ENCODE measurements at regions of chr13 and their contacts with region 1.

Region 1: DNA sequence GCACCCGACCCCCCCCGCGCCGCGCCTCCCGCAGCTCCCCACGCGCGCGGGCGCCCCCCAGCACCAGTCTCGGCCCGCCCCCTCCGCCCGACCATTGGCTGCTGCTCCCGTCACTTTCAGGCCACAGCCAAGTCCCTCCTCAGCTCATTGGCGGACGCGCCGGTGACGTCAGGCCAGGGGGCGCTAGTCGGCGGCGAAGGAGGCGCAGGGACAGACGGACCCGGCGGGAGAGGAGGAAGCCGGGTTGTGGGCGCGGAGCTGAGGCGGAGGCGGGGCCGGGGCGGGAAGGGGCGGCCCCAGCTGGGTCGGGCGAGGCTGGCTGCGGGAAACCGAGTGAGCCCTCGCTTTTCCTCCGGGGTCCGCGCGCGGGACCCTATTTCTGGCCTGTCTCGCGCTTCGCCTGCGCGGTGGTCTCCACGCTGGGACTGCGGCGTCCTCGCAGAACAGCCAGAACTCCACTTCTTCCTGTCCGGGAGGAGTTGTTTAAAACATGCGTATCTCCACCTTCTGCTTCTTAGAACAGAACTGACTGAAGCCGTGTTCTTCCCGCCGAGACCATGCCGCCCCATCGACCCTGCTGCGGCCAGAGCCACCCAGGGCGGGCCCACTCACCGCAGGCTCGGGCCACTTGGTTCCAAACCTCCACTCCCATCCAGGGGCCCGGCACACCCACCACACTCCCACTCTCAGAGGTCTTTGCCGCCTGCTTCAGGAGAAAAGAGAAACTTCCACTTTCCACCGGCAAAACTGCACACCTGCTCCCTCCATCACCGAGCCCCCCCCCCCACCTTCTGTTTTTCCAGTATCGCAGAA is 459 bp upstream of the TMTC4 start:
- DNase-seq: peak; percentile 99
- H3K4me3 Mint-ChIP-seq: peak overlapping the region; percentile 76
- H3K27ac Mint-ChIP-seq: peak overlapping the region; percentile 20
- H3K4me1 Mint-ChIP-seq: peaks cover 20% of the 10 kb centered on the region
- H3K27me3 Mint-ChIP-seq: no peaks in the 10 kb centered on the region

Region 2: DNA sequence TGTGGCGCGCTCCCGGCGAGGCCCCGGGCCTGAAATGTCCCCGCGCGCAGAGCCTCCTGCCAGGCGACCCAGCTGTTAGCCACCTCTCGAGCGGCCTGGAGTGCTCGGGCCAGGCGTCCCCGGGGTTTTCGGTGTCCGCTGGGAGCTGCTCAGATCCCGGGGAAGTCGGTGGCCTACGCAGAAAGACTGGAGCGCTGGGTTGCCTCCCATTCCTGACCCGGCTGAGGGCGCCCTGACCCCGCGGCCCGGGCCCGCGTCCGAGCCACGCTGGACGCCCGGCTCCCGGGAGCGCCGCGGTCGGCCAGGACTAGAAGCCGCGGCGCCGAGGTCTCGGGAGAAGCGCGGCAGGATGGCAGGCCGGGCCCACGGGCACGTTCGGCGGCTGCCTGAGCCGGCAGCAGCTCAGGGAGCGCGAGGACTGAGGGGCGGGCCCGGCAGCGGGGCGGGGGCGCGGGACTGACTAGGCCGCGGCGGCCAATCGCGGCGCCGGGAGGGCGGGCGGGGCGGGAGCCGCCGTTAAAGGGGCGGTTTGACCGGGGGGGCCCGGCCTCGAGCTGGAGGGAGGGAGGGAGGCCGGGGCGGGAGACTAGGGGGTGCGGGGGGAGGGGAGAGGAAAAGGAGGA is 694.7 kb before region 1 on chr13:
- CTCF ChIA-PET with region 1: no interaction called
- intact Hi-C with region 1: loop called (anchors 10 kb)
- DNase-seq: peak; percentile 62
- H3K4me3 Mint-ChIP-seq: peak overlapping the region; percentile 15
- H3K27ac Mint-ChIP-seq: no peak overlapping the region
- H3K4me1 Mint-ChIP-seq: peaks cover 23% of the 10 kb centered on the region
- H3K27me3 Mint-ChIP-seq: peaks cover 69% of the 10 kb centered on the region

Region 3: GRCh38 chr13:100306030-100306429 is 369.0 kb before region 1 on chr13:
- CTCF ChIA-PET with region 1: no interaction called
- intact Hi-C with region 1: no loop called
- DNase-seq: no peak
- H3K4me3 Mint-ChIP-seq: no peak overlapping the region
- H3K27ac Mint-ChIP-seq: no peak overlapping the region
- H3K4me1 Mint-ChIP-seq: no peaks in the 10 kb centered on the region
- H3K27me3 Mint-ChIP-seq: no peaks in the 10 kb centered on the region

Region 4: GRCh38 chr13:100392709-100393641 is 282.1 kb before region 1 on chr13:
- CTCF ChIA-PET with region 1: no interaction called
- intact Hi-C with region 1: loop called (anchors 10 kb)
- DNase-seq: peak; percentile 88
- H3K4me3 Mint-ChIP-seq: no peak overlapping the region
- H3K27ac Mint-ChIP-seq: no peak overlapping the region
- H3K4me1 Mint-ChIP-seq: peaks cover 24% of the 10 kb centered on the region
- H3K27me3 Mint-ChIP-seq: no peaks in the 10 kb centered on the region

Region 5: DNA sequence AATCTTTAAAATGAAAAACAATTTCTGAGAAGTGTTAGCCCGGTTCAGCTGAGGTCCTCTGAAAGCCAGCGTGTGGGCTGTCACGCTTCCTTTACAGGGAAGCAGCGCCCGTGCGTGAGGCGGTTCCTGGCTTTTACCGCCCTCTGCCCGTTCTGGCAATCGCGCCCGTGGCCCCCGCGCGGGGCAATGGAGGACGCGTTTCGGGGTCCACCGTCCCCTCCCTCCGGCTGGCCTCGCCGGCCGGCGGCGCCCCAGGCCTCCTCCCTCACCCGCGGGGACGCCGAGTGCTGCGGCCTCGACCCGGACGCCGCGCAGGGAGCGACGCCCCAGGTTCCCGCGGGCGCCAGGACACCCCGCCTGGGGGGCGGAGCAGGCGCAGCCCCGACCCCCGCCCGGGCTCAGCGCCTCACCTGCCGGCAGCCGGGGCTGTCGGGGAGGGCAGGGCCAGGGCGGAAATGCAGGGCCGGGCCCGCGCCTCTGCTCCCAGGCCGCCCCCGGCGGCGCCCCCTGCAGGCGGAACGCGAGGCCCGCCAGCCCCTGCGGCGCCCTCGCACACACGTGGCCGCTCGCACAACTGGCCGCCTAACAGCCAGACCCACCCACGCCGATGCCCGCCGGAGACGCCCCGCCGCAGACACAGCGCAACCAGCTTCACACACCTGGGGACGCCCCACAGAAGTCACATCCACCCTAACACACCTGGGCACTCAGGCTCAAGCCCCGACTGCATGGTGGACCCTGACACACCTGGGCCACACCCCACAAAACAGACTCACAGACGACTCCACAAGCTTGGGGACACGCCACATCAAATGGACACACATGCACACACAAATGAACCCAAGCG is 86.5 kb before region 1 on chr13 and contains the start of gene GGACT:
- CTCF ChIA-PET with region 1: no interaction called
- intact Hi-C with region 1: loop called (anchors 1 kb)
- DNase-seq: peak; percentile 84
- H3K4me3 Mint-ChIP-seq: peak within 1 kb of the TSS; percentile 75
- H3K27ac Mint-ChIP-seq: peak within 1 kb of the TSS; percentile 87
- H3K4me1 Mint-ChIP-seq: peaks cover 39% of the 10 kb centered on the region
- H3K27me3 Mint-ChIP-seq: no peaks in the 10 kb centered on the region
- total RNA-seq, gene GGACT: 3.9 to 6.6 TPM

Region 6: GRCh38 chr13:100625456-100625855 is 49.6 kb before region 1 on chr13:
- CTCF ChIA-PET with region 1: no interaction called
- intact Hi-C with region 1: no loop called
- DNase-seq: no peak
- H3K4me3 Mint-ChIP-seq: no peak overlapping the region
- H3K27ac Mint-ChIP-seq: no peak overlapping the region
- H3K4me1 Mint-ChIP-seq: peaks cover 5% of the 10 kb centered on the region
- H3K27me3 Mint-ChIP-seq: no peaks in the 10 kb centered on the region

Region 7: GRCh38 chr13:100773923-100774663 is 99.0 kb after region 1 on chr13:
- CTCF ChIA-PET with region 1: no interaction called
- intact Hi-C with region 1: no loop called
- DNase-seq: no peak
- H3K4me3 Mint-ChIP-seq: no peak overlapping the region
- H3K27ac Mint-ChIP-seq: no peak overlapping the region
- H3K4me1 Mint-ChIP-seq: peaks cover 8% of the 10 kb centered on the region
- H3K27me3 Mint-ChIP-seq: no peaks in the 10 kb centered on the region

Region 8: GRCh38 chr13:100859861-100860260 is 184.8 kb after region 1 on chr13:
- CTCF ChIA-PET with region 1: no interaction called
- intact Hi-C with region 1: no loop called
- DNase-seq: no peak
- H3K4me3 Mint-ChIP-seq: no peak overlapping the region
- H3K27ac Mint-ChIP-seq: no peak overlapping the region
- H3K4me1 Mint-ChIP-seq: no peaks in the 10 kb centered on the region
- H3K27me3 Mint-ChIP-seq: peaks cover 7% of the 10 kb centered on the region

Region 9: DNA sequence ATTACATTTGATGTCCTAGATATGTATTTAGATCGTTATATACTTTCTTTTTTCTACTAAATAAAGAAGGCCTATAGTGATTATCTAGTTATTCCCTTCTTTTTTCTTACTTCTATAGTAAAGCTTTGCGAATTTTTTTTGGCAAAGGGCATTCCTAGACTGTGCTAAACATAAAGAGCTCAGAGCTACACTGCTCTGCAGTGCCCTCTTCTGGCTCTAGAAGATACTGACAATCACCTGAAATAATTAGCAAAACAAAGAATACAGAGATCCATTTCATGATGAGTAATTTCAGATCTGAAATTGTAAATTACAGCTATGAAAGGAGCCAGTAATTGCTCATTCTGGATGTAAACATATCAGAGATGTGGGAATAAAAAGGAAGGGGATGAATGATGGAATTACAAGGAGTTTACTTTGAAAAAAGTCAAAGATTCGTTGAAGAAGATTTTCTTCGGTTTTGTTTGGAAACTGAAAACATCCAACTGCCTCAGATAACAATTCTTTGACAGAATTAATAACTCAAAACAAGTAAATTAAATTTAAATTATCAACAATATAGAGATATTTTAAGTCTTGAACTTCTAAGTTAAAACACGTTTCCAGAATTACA is 452.8 kb after region 1 on chr13:
- CTCF ChIA-PET with region 1: no interaction called
- intact Hi-C with region 1: loop called (anchors 5 kb)
- DNase-seq: peak; percentile 34
- H3K4me3 Mint-ChIP-seq: no peak overlapping the region
- H3K27ac Mint-ChIP-seq: no peak overlapping the region
- H3K4me1 Mint-ChIP-seq: peaks cover 2% of the 10 kb centered on the region
- H3K27me3 Mint-ChIP-seq: peaks cover 3% of the 10 kb centered on the region

Region 10: GRCh38 chr13:102596147-102597028 is 1921.3 kb after region 1 on chr13 and contains the start of gene TPP2:
- CTCF ChIA-PET with region 1: no interaction called
- intact Hi-C with region 1: loop called (anchors 10 kb)
- DNase-seq: peak; percentile 98
- H3K4me3 Mint-ChIP-seq: peak within 1 kb of the TSS; percentile 98
- H3K27ac Mint-ChIP-seq: peak within 1 kb of the TSS; percentile 100
- H3K4me1 Mint-ChIP-seq: peaks cover 55% of the 10 kb centered on the region
- H3K27me3 Mint-ChIP-seq: no peaks in the 10 kb centered on the region
- total RNA-seq, gene TPP2: 51.9 to 54.7 TPM

Measured in activated naive CD4-positive, alpha-beta T cell treated with anti-CD3 and anti-CD28 coated beads for 36 hours (primary cell).